A549 (cell line): ENCODE measurements at regions of chr10 and their contacts with region 1.

Region 1: GRCh38 chr10:93904901-93905300 is 11.1 kb downstream of the SLC35G1 start:
- DNase-seq: no peak
- ATAC-seq: no peak
- H3K4me3 ChIP-seq: no peak overlapping the region
- H3K27ac ChIP-seq: no peak overlapping the region
- H3K4me1 ChIP-seq: no peaks in the 10 kb centered on the region
- CTCF ChIP-seq: no peak
- EP300 ChIP-seq: no peak
- POLR2A ChIP-seq: no peak
- RAD21 ChIP-seq: no peak

Region 2: DNA sequence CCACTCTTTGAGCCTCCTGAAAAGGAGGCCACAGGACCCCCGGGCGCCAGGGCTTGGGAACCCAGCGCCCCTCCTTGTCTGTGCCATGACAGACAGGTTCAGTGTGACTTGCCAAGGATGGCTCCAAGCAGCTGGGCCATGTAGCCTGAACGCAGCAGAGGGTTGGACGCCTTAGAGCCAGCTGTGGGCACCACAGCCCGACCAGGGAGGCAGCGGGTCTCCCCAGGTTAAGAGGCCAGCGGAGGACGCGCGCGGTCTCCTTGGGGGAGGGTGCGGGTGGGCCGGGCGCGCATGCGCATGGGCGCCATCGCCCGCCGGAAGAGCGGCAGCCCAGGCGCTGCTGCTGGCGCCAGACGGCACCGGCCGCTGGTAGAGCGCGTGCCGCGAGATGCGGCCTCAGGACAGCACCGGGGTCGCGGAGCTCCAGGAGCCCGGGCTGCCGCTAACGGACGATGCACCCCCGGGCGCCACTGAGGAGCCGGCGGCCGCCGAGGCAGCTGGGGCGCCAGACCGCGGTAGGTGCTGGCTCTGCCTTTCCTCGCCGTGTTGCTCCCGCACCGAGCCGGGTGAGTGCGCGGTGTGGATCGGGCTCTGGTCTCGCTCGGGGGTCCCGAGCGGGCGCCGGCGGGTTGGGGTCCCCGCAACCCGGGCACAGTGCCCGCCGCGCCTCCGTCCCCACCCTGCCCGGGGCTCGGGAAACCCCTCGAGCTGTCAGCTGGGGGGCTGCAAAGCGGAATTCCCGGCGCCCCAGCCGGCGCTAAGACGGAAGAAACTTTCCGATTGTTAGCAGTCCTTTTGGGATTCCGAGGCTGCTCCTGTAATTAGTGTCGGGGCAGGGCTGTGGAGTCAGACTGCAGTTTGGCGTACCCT is 11.0 kb before region 1 on chr10 and contains the start of gene SLC35G1:
- CTCF ChIA-PET with region 1: interaction called, 10 read pairs
- POLR2A ChIA-PET with region 1: no interaction called
- DNase-seq: peak; percentile 82 to 83
- ATAC-seq: peak; percentile 94 to 97
- H3K4me3 ChIP-seq: peak within 1 kb of the TSS; percentile 99
- H3K27ac ChIP-seq: peak within 1 kb of the TSS; percentile 96 to 98
- H3K4me1 ChIP-seq: peaks cover 23% of the 10 kb centered on the region
- CTCF ChIP-seq: 0 out of 3 replicates have a peak, but pooled peaks have one; percentile 12
- EP300 ChIP-seq: no peak
- POLR2A ChIP-seq: peak; percentile 99
- RAD21 ChIP-seq: no peak
- polyA plus RNA-seq, gene SLC35G1: 16.8 and 17.3 TPM in 2 replicates